ENCODE measurements at regions of chr2 and their contacts with region 1.

Region 1: GRCh38 chr2:30282086-30282485 is 50.8 kb downstream of the LBH start:
- DNase-seq: peak; percentile 89
- ATAC-seq: peak; percentile 98
- H3K4me3 ChIP-seq: peak overlapping the region in 2 of 5 experiments; percentile 11 to 40
- H3K4me3 Mint-ChIP-seq: peak overlapping the region; percentile 66
- H3K27ac ChIP-seq: peak overlapping the region; percentile 75 to 88
- H3K27ac Mint-ChIP-seq: peak overlapping the region; percentile 92
- H3K4me1 ChIP-seq: peaks cover 89 to 94% of the 10 kb centered on the region in 2 donors
- H3K4me1 Mint-ChIP-seq: peaks cover 91% of the 10 kb centered on the region
- H3K27me3 ChIP-seq: no peaks in the 10 kb centered on the region
- H3K27me3 Mint-ChIP-seq: no peaks in the 10 kb centered on the region
- CTCF ChIP-seq: no peak

Region 2: GRCh38 chr2:29700560-29700959 is 581.5 kb before region 1 on chr2:
- CTCF ChIA-PET with region 1: no interaction called
- POLR2A ChIA-PET with region 1: no interaction called
- intact Hi-C with region 1: no loop called
- DNase-seq: no peak
- ATAC-seq: no peak
- H3K4me3 ChIP-seq: no peak overlapping the region
- H3K4me3 Mint-ChIP-seq: no peak overlapping the region
- H3K27ac ChIP-seq: no peak overlapping the region
- H3K27ac Mint-ChIP-seq: no peak overlapping the region
- H3K4me1 ChIP-seq: no peaks in the 10 kb centered on the region
- H3K4me1 Mint-ChIP-seq: no peaks in the 10 kb centered on the region
- H3K27me3 ChIP-seq: no peaks in the 10 kb centered on the region
- H3K27me3 Mint-ChIP-seq: no peaks in the 10 kb centered on the region
- CTCF ChIP-seq: no peak

Region 3: DNA sequence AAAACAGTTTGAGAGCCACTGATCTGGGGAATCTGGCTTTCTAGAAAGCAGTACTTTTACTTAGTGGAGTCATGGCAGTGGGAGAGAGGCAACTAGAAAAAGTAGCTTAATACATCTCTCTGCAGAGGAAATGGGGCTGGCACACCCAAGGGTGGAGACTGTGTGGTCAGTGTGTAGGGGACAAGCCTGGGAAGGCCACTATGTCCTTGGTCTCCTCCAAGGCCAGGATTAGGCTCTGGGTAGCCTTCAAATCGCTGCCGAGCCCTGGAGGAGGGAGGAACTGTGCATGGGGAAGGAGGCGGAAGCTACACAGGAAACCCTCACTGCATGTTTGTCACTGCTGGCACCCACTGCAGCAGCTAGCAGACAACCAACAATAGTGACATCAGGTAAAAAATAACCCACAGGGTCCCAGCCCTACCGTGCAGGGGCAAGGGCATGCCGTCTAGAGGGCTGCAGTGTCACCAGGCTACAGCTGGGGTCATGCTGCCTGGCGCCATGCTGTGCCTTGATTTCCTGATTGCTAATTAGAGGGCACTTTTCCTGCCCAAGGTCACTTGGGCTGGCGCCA is 15.9 kb before region 1 on chr2:
- CTCF ChIA-PET with region 1: interaction called, 14 read pairs
- POLR2A ChIA-PET with region 1: interaction called, 11 read pairs
- intact Hi-C with region 1: loop called (anchors 1 kb)
- DNase-seq: peak; percentile 61
- ATAC-seq: peak; percentile 85
- H3K4me3 ChIP-seq: peak overlapping the region in 3 of 5 experiments; percentile 4 to 22 (median 16)
- H3K4me3 Mint-ChIP-seq: peak overlapping the region; percentile 85
- H3K27ac ChIP-seq: peak overlapping the region; percentile 76 to 90
- H3K27ac Mint-ChIP-seq: peak overlapping the region; percentile 99
- H3K4me1 ChIP-seq: peaks cover 64 to 72% of the 10 kb centered on the region in 2 donors
- H3K4me1 Mint-ChIP-seq: peaks cover 81% of the 10 kb centered on the region
- H3K27me3 ChIP-seq: no peaks in the 10 kb centered on the region
- H3K27me3 Mint-ChIP-seq: no peaks in the 10 kb centered on the region
- CTCF ChIP-seq: no peak

Region 4: GRCh38 chr2:30293303-30293921 is 11.3 kb after region 1 on chr2:
- CTCF ChIA-PET with region 1: interaction called, 7 read pairs
- POLR2A ChIA-PET with region 1: interaction called, 16 read pairs
- intact Hi-C with region 1: loop called (anchors 2 kb)
- DNase-seq: peak; percentile 56
- ATAC-seq: peak; percentile 74
- H3K4me3 ChIP-seq: no peak overlapping the region
- H3K4me3 Mint-ChIP-seq: peak overlapping the region; percentile 73
- H3K27ac ChIP-seq: peak overlapping the region; percentile 25 to 50
- H3K27ac Mint-ChIP-seq: peak overlapping the region; percentile 94
- H3K4me1 ChIP-seq: peaks cover 66 to 70% of the 10 kb centered on the region in 2 donors
- H3K4me1 Mint-ChIP-seq: peaks cover 79% of the 10 kb centered on the region
- H3K27me3 ChIP-seq: no peaks in the 10 kb centered on the region
- H3K27me3 Mint-ChIP-seq: no peaks in the 10 kb centered on the region
- CTCF ChIP-seq: no peak